ENCODE measurements at regions of chr11 and their contacts with region 1.

Region 1: DNA sequence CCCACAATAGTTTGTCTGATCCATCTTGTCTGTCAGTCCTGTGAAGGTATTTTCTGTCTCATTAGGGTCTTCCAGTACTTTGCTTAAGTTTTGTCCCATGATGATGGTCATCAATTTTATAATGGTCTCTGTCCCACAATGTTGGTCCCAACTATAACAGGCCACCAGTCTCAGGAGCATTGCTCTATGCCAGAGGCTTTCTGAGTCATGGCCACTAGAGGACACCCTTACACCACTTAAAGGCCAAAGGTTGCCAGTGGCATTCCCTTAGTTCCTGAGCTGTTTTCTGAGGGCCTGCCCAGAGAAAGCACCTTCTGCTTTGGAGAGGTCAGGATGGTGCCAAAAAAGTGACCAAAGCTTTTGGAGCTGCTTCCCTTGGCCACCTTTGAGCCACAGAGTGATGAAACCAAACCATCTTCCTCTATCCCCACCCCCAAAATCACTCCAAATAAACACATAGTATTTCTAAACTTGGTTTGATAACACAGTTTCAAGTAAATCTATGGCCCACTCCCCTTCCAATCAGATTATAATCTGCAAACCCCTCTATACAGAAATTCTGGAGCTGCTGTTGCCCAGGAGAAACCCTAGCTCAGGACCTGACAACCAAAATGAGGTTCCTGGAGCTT is 19.3 kb downstream of the EIF3F start:
- DNase-seq: peak; percentile 63
- ATAC-seq: peak; percentile 80
- H3K4me3 Mint-ChIP-seq: no peak overlapping the region
- H3K27ac Mint-ChIP-seq: no peak overlapping the region
- H3K4me1 Mint-ChIP-seq: no peaks in the 10 kb centered on the region
- H3K27me3 Mint-ChIP-seq: peaks cover 3% of the 10 kb centered on the region

Region 2: DNA sequence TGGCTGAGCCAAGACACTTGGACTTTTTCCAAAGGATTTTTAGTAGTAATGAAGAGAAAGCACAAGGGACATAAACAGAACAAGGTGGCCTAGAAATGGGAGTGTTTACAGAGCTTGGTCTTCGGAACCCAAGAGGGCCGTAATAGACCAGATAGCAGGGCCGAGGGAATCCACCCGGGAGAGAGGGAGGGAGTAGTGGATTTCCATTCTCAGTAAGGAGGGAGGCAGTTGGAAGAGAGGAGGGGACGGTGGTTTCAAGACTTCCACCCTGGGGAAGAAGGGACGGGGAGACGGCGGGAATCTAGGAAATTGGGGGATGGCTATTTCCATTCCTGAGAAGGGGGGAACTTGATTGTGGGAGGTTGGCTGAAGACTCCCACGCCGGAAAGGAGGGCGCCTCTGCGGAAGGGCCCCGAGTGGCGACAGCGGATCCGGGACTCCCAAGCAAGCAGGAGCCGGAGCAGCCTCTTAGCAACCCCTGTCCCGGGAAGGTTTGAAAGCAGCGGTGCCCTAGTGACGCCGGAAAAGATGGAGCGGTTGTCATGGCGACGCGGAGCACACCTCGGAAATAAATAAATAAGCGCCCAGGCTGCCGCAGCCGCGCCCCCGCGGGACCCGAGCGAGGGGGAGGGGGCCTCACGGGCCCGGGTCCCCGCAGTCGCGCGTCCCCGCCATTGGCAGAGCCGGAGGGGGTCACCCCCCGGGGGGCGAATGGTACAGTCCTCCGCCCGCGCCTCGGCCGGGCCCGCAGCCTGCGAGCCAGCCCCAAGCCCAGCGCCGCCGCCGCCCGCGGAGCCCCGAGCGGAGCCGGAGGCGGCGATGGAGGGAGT is 12.2 kb after region 1 on chr11:
- CTCF ChIA-PET with region 1: interaction called, 11 read pairs
- POLR2A ChIA-PET with region 1: no interaction called
- intact Hi-C with region 1: no loop called
- DNase-seq: peak; percentile 67
- ATAC-seq: peak; percentile 57
- H3K4me3 Mint-ChIP-seq: peak overlapping the region; percentile 56
- H3K27ac Mint-ChIP-seq: no peak overlapping the region
- H3K4me1 Mint-ChIP-seq: peaks cover 10% of the 10 kb centered on the region
- H3K27me3 Mint-ChIP-seq: peaks cover 30% of the 10 kb centered on the region

Region 3: DNA sequence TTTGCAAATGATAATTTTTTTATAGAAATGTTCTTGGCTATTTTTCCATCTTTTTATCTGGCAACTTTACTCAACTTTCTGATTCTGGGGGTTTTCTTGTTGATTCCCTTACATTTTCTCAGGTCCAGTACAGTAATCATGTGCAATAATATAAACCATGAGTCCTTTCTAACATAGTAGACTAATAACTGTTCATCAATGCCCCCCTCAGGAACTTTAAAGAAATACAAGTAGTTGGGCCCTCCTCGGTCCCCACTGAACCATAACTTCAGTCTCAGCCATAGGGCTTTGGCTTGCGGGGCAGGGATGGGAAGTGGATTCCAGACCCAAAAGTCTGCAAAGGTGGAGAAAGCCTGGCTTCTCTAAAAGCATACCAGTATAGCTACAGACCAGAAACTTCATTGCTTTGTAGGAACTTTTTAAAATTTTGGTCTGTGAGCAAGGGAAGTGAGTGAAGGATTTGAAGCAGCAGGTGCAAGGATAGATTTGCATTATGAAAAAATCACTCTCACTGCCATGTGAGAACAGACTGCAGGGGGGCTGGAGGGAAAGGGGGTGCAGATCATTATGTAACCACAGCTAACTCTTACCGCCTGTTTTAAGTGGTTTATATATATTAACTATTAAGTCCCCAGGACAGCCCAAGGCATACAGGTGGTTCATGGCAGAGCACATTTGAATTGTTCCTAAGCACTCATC is 64.1 kb after region 1 on chr11:
- CTCF ChIA-PET with region 1: interaction called, 4 read pairs
- POLR2A ChIA-PET with region 1: interaction called, 3 read pairs
- intact Hi-C with region 1: loop called in 1 of 2 experiments (anchors 2 kb)
- DNase-seq: no peak
- ATAC-seq: peak; percentile 70
- H3K4me3 Mint-ChIP-seq: no peak overlapping the region
- H3K27ac Mint-ChIP-seq: no peak overlapping the region
- H3K4me1 Mint-ChIP-seq: peaks cover 4% of the 10 kb centered on the region
- H3K27me3 Mint-ChIP-seq: peaks cover 17% of the 10 kb centered on the region

Region 4: DNA sequence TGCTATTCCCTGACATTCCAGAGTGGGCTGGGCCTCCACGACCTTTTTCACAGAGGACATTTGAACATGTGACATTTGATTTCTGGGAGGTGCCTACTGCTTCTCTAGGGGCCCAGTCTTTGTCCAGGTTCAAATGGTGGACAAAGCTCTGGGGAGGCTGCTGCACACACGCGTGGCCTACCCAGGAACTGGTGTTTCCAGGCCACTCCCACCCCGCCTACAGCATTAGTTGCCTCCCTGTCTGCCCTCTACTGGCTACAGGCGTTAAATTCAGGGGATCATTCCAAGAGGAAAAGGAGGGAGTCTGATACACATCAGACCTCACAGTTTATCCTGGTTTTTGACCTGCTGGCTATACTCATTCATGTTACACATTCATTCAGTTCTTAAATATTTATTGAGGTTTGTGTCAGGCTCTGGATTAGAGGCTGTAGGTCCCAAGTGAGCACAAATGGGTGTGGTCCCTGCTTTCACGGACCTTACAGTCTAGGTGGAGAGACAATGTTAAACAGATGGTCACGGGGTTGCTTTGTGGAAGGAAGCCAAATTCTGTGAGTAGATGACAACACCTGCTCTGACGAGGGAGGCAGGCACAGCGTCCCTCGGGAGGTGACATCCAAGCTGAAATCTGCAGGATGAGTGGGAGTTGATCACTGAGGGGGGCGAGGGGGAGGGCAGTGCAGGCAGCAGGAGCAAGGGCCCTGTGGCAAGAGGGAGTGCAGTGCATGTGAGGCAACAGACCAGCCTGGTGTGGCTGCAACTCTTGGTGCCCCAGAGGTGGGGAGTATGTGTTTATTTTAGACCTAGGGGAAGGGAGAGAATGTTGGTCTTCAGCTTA is 86.3 kb after region 1 on chr11:
- CTCF ChIA-PET with region 1: interaction called, 56 read pairs
- POLR2A ChIA-PET with region 1: no interaction called
- intact Hi-C with region 1: loop called (anchors 1 to 2 kb)
- DNase-seq: peak; percentile 75
- ATAC-seq: peak; percentile 87
- H3K4me3 Mint-ChIP-seq: no peak overlapping the region
- H3K27ac Mint-ChIP-seq: no peak overlapping the region
- H3K4me1 Mint-ChIP-seq: no peaks in the 10 kb centered on the region
- H3K27me3 Mint-ChIP-seq: no peaks in the 10 kb centered on the region

Region 5: GRCh38 chr11:8263769-8264410 is 257.4 kb after region 1 on chr11 and contains the start of gene LMO1:
- CTCF ChIA-PET with region 1: interaction called, 6 read pairs
- POLR2A ChIA-PET with region 1: no interaction called
- intact Hi-C with region 1: loop called in 1 of 2 experiments (anchors 5 kb)
- DNase-seq: peak; percentile 89
- ATAC-seq: peak; percentile 83
- H3K4me3 Mint-ChIP-seq: peak within 1 kb of the TSS; percentile 56
- H3K27ac Mint-ChIP-seq: no peak within 1 kb of the TSS
- H3K4me1 Mint-ChIP-seq: peaks cover 7% of the 10 kb centered on the region
- H3K27me3 Mint-ChIP-seq: peaks cover 64% of the 10 kb centered on the region
- total RNA-seq, gene LMO1: not detected

Region 6: GRCh38 chr11:8480858-8481257 is 474.4 kb after region 1 on chr11:
- CTCF ChIA-PET with region 1: no interaction called
- POLR2A ChIA-PET with region 1: no interaction called
- intact Hi-C with region 1: no loop called
- DNase-seq: no peak
- ATAC-seq: no peak
- H3K4me3 Mint-ChIP-seq: no peak overlapping the region
- H3K27ac Mint-ChIP-seq: no peak overlapping the region
- H3K4me1 Mint-ChIP-seq: no peaks in the 10 kb centered on the region
- H3K27me3 Mint-ChIP-seq: no peaks in the 10 kb centered on the region

Measured in activated CD4-positive, alpha-beta T cell treated with anti-CD3 and anti-CD28 coated beads for 36 hours (primary cell).